ENCODE measurements at regions of chr4 and their contacts with region 1.

Region 1: DNA sequence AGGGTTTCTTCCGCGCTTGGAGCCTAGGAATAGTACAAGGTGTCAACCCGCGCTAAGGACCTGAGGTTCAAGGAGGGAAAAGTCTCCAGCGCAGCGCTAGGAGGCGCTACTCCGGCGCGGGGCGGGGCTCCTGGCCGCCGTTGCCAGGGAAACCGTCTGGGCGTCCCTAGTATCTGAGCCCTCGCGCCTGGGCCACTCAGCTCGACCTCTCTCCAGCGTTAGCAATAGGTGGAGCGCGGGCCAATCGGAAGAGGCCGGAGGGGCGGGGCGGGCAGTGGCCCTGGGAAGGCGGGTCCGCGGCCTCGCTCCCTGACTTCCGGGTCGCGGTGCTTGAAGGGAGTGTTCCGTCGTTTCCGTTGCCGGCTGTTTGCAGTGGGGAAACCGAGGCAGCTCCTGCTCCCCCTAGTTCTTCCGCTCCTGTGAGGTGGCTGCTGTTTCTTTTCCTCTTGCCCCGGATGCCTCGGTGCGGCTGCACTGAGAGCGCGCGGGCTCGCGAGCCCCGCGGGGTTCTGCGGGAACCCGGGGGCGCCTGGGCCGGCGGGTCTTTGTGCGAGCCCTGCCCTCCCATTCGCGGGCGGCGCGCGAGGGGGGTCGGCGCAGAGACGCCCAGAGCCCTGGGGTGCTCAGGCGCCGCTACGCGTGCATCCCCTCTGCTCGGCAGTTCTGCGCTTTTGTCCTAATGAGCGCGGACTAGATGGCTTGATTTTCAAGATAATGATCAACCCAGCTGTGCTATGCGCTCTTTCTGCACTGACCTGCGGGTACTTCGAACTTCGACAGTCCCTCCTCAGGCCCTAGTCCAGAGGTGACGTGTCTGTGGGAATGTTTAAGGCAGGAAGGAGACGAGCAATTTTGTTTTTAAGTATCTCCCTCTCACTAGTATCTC is at the start of gene ELMOD2:
- DNase-seq: peak; percentile 99
- ATAC-seq: peak; percentile 100
- H3K4me3 ChIP-seq: peak within 1 kb of the TSS; percentile 66 to 98 (median 86)
- H3K27ac ChIP-seq: peak within 1 kb of the TSS; percentile 38 to 94 (median 87)
- H3K4me1 ChIP-seq: peaks cover 0 to 40% (median 18%) of the 10 kb centered on the region in 9 donors
- H3K27me3 ChIP-seq: no peaks in the 10 kb centered on the region
- CTCF ChIP-seq: peak; percentile 82 to 99 (median 94)
- total RNA-seq, gene ELMOD2: 14.3 to 20.3 (median 17.4) TPM

Region 2: DNA sequence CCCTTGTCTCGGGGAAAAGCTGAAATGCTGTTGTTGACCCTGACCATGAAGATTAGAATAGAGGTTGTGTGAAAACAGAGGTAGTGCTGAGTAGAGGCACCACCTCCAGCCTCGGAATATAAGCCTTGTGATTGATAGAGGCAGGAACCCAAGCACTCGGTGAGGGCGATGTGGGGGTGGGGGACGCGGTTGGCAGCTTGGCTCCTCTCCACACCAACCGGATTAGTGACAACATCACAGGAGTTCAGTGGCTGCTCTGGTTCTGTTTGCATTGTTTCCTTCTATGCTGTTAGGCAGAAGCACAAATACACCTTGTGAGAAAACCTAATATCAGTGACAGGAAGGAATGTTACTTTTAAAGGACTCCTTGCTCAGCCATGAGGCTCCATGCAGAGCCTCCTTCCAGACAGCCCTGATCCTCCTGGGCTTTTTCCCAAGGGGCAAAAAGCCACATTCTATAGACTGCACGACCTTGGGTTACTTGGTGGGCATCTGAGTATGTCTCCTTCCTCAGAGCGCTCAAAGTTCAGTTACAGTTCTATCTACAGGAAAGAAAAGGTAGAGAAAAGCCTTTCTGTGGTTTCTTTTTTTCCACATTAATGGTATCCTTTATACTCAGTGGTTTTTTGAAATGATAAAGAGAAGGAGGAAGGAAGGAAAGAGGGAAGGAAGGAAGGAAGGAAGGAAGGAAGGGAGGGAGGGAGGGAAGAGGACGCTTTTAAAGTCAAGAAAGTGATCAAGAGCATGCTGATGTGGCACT is 1659.0 kb before region 1 on chr4:
- intact Hi-C with region 1: no loop called
- DNase-seq: no peak
- ATAC-seq: no peak
- H3K4me3 ChIP-seq: no peak overlapping the region
- H3K27ac ChIP-seq: no peak overlapping the region
- H3K4me1 ChIP-seq: no peaks in the 10 kb centered on the region
- H3K27me3 ChIP-seq: peaks cover 0 to 13% (median 4%) of the 10 kb centered on the region in 7 donors
- CTCF ChIP-seq: no peak

Region 3: DNA sequence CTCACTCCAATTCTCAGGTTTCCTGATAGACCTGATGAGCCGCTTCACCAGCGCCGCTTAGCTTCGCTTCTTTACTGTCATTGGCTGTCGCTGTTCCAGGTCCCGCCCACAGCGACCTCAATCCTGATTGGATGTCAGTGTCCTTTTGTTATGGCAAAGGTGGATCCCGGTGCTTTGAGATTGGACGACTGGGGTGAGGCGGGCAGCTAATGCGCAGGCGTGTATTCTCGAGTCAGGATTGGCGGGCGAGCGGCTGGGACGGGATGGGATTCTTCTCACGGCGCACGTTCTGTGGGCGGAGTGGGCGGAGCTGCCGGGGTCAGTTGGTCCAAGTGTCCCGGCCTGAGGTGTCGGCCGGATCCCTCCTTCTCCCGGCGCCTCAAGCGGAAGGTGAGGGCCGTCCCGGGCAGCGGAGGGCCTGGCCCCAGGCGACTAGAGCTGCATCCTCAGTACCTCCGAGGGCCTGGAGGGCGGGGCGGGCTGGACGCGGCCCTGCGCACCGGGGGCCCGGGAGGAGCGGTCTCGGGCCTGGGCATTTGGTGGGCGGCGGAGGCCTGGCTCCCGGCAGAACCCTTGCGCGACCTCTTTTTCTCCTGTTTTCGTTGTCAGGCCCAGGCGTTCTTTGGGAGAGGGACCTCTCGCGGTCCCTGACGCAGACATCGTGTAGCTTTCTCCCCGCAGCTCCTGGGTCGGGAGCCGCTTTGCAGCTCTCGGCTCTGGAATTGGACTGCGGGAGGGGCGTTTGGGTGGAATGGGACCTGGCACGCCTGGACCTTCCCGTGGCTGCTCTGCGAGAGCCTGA is 150.6 kb before region 1 on chr4 and contains the start of gene SCOC:
- intact Hi-C with region 1: loop called in 6 of 10 experiments (anchors 5 to 10 kb)
- DNase-seq: peak; percentile 98 to 99
- ATAC-seq: peak; percentile 98 to 100 (median 99)
- H3K4me3 ChIP-seq: peak within 1 kb of the TSS; percentile 72 to 96 (median 85)
- H3K27ac ChIP-seq: peak within 1 kb of the TSS; percentile 84 to 97 (median 94)
- H3K4me1 ChIP-seq: peaks cover 0 to 53% (median 42%) of the 10 kb centered on the region in 9 donors
- H3K27me3 ChIP-seq: no peaks in the 10 kb centered on the region
- CTCF ChIP-seq: no peak
- total RNA-seq, gene SCOC: 61.8 to 76.8 (median 67.0) TPM

Region 4: GRCh38 chr4:140382732-140383131 is 141.4 kb before region 1 on chr4:
- intact Hi-C with region 1: loop called in 3 of 10 experiments (anchors 5 to 10 kb)
- DNase-seq: no peak
- ATAC-seq: no peak
- H3K4me3 ChIP-seq: no peak overlapping the region
- H3K27ac ChIP-seq: peak overlapping the region in 1 of 10 donors; percentile 11
- H3K4me1 ChIP-seq: peaks cover 0 to 22% (median 12%) of the 10 kb centered on the region in 9 donors
- H3K27me3 ChIP-seq: no peaks in the 10 kb centered on the region
- CTCF ChIP-seq: no peak

Region 5: GRCh38 chr4:140427106-140427961 is 96.8 kb before region 1 on chr4 and contains the start of gene CLGN:
- intact Hi-C with region 1: loop called in 4 of 10 experiments (anchors 5 to 10 kb)
- DNase-seq: peak; percentile 71 to 82
- ATAC-seq: peak; percentile 90 to 97 (median 95)
- H3K4me3 ChIP-seq: peak within 1 kb of the TSS; percentile 57 to 84 (median 73)
- H3K27ac ChIP-seq: peak within 1 kb of the TSS; percentile 53 to 91 (median 85)
- H3K4me1 ChIP-seq: peaks cover 0 to 22% (median 6%) of the 10 kb centered on the region in 9 donors
- H3K27me3 ChIP-seq: peaks cover 0 to 14% (median 3%) of the 10 kb centered on the region in 7 donors
- CTCF ChIP-seq: peak in 8 of 9 donors; percentile 43 to 70 (median 58)
- total RNA-seq, gene CLGN: 51.3 to 125 (median 71.6) TPM

Region 6: GRCh38 chr4:140609548-140610425 is 85.7 kb after region 1 on chr4:
- intact Hi-C with region 1: loop called in 3 of 10 experiments (anchors 2 to 10 kb)
- DNase-seq: no peak
- ATAC-seq: peak; percentile 74 to 90 (median 86)
- H3K4me3 ChIP-seq: peak overlapping the region in 1 of 10 donors; percentile 4
- H3K27ac ChIP-seq: peak overlapping the region in 8 of 10 donors; percentile 17 to 75 (median 39)
- H3K4me1 ChIP-seq: peaks cover 0 to 14% (median 4%) of the 10 kb centered on the region in 9 donors
- H3K27me3 ChIP-seq: no peaks in the 10 kb centered on the region
- CTCF ChIP-seq: peak; percentile 42 to 74 (median 62)

Region 7: GRCh38 chr4:140764774-140765392 is 240.8 kb after region 1 on chr4:
- intact Hi-C with region 1: loop called in 1 of 10 experiments (anchors 10 kb)
- DNase-seq: no peak
- ATAC-seq: peak in 1 of 8 donors; percentile 53
- H3K4me3 ChIP-seq: no peak overlapping the region
- H3K27ac ChIP-seq: no peak overlapping the region
- H3K4me1 ChIP-seq: peaks cover 0 to 9% (median 0%) of the 10 kb centered on the region in 9 donors
- H3K27me3 ChIP-seq: no peaks in the 10 kb centered on the region
- CTCF ChIP-seq: no peak

Measured in heart right ventricle (tissue), 16 donors.